CD4-positive, alpha-beta memory T cell (primary cell): ENCODE measurements at regions of chr3 and their contacts with region 1.

Region 1: GRCh38 chr3:129934234-129935123 is 40.0 kb upstream of the TRH start:
- DNase-seq: peak in 4 of 5 donors; percentile 16 to 27 (median 24)
- H3K4me3 ChIP-seq: no peak overlapping the region
- H3K4me3 Mint-ChIP-seq: peak overlapping the region in 5 of 8 donors; percentile 18 to 50 (median 22)
- H3K27ac ChIP-seq: no peak overlapping the region
- H3K27ac Mint-ChIP-seq: peak overlapping the region in 1 of 7 donors; percentile 20
- H3K4me1 ChIP-seq: no peaks in the 10 kb centered on the region
- H3K4me1 Mint-ChIP-seq: peaks cover 9 to 20% (median 10%) of the 10 kb centered on the region in 4 donors
- H3K27me3 ChIP-seq: no peaks in the 10 kb centered on the region
- H3K27me3 Mint-ChIP-seq: peaks cover 2 to 5% of the 10 kb centered on the region in 2 donors

Region 2: DNA sequence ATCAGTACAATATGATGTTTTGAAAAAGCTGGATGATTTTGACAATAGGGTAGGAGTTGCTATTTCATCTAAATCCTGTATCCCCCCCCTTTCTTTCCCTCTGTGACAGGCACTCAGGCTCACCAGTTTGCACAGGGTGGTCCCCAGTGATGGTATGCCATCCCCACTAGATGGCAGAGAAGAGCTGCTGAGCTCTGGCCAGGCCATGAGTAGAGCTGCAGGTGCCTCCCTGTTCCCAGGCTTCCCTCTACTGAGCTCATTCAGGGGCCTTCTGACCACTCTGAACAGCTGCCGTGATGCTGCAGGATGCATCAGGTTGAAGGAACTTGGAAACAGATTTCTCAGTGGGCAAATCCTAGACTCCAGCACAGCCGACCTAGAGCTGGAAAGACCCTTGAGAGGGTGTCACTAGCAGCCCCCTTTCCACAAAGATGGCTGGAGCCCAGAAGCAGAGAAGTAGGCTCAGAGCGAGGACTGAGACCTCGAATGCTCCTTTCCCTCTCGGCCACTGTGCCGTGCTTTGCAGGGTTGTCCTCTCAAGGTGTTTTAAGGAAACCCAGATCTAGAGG is 551.1 kb before region 1 on chr3:
- CTCF ChIA-PET with region 1: interaction called, 3 read pairs
- POLR2A ChIA-PET with region 1: no interaction called
- intact Hi-C with region 1: loop called (anchors 2 kb)
- DNase-seq: peak; percentile 13 to 50 (median 32)
- H3K4me3 ChIP-seq: no peak overlapping the region
- H3K4me3 Mint-ChIP-seq: no peak overlapping the region
- H3K27ac ChIP-seq: no peak overlapping the region
- H3K27ac Mint-ChIP-seq: peak overlapping the region in 1 of 7 donors; percentile 29
- H3K4me1 ChIP-seq: no peaks in the 10 kb centered on the region
- H3K4me1 Mint-ChIP-seq: peaks cover 0 to 3% (median 0%) of the 10 kb centered on the region in 4 donors
- H3K27me3 ChIP-seq: no peaks in the 10 kb centered on the region
- H3K27me3 Mint-ChIP-seq: no peaks in the 10 kb centered on the region

Region 3: DNA sequence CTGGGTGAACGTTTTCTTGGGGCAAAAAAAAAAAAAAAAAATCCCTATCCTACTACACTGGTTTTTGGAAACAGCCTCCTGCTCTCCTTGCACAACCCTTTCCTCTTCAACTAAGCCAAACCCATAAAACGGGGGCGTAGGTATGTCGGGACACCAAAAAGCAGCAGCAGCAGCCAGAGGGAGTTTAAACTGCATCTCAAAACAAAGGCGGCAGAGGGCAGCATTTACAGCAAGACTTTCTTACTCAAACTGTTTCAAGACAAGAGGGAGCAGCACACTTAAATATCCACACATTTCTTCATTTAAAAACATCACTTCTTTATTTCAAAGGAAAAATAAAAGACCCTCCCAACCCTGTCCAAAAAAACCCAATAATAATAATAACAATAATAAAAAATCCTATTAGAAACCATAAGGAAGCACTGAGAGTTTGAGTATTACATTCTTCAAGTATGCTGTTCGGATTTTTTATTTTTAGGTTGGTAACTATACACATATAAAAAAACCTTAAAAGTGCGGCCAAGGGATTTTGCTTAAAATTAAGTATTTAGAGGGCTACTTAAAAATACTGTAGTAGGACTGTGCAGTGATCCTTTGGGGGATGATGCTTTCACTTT is 284.1 kb before region 1 on chr3:
- CTCF ChIA-PET with region 1: interaction called, 6 read pairs
- POLR2A ChIA-PET with region 1: no interaction called
- intact Hi-C with region 1: loop called (anchors 1 kb)
- DNase-seq: peak; percentile 38 to 55 (median 43)
- H3K4me3 ChIP-seq: no peak overlapping the region
- H3K4me3 Mint-ChIP-seq: no peak overlapping the region
- H3K27ac ChIP-seq: no peak overlapping the region
- H3K27ac Mint-ChIP-seq: peak overlapping the region in 2 of 7 donors; percentile 59 to 81
- H3K4me1 ChIP-seq: no peaks in the 10 kb centered on the region
- H3K4me1 Mint-ChIP-seq: peaks cover 0 to 4% (median 1%) of the 10 kb centered on the region in 4 donors
- H3K27me3 ChIP-seq: no peaks in the 10 kb centered on the region
- H3K27me3 Mint-ChIP-seq: no peaks in the 10 kb centered on the region

Region 4: DNA sequence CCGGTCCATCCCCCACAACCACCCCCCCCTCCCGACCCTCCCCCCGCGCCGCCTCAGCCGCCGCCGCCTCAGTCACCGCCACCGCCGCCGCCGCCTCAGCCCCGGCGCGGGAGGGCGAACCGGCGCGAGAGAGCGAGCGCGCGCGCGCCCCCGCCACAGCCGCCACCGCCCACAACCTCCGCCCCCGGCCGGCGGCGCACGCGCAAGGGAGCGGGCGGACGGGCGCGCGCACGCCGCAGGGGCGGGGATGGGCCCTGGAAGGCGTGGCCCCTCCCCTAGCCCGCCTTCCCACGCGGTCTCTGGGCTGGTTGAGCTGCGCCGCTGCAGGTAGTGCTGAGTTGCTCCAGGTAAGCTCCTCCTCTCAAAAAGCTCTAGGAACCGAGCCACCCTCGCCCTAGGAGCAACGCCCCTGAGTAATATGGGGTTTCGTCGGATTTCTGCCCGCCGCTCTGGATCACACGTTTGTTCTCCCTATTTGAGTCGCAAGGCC is 40.9 kb before region 1 on chr3 and contains the start of gene TMCC1:
- CTCF ChIA-PET with region 1: interaction called, 3 read pairs
- POLR2A ChIA-PET with region 1: no interaction called
- intact Hi-C with region 1: loop called (anchors 1 kb)
- DNase-seq: peak; percentile 90 to 94 (median 92)
- H3K4me3 ChIP-seq: peak within 1 kb of the TSS; percentile 87 to 96
- H3K4me3 Mint-ChIP-seq: peak within 1 kb of the TSS; percentile 88 to 96 (median 92)
- H3K27ac ChIP-seq: peak within 1 kb of the TSS; percentile 82
- H3K27ac Mint-ChIP-seq: peak within 1 kb of the TSS; percentile 92 to 97 (median 93)
- H3K4me1 ChIP-seq: peaks cover 46% of the 10 kb centered on the region
- H3K4me1 Mint-ChIP-seq: peaks cover 23 to 47% (median 37%) of the 10 kb centered on the region in 4 donors
- H3K27me3 ChIP-seq: no peaks in the 10 kb centered on the region
- H3K27me3 Mint-ChIP-seq: peaks cover 0 to 1% of the 10 kb centered on the region in 2 donors
- total RNA-seq, gene TMCC1: 36.4 to 39.3 TPM